ENCODE measurements at regions of chr19 and their contacts with region 1.

Region 1: DNA sequence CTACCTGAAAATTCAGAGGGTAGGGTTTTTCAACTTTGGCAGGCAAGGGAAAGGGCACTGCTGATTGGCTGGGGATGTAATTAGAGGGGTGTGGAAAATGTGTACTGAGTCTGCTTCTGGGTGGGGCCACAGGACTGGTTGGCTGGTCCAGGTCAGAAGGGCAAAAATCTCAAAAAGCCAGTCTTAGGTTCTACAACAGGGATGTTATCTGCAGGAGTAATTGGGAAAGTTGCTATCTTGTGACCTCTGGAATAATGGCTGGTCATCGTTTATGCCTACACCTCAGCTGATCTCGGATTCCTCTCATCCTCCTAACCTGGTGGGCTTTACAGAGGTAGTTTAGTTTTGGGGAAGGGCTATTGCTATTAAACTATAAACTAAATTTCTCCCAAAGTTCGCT is 136.7 kb upstream of the LSM14A start:
- DNase-seq: no peak
- H3K4me3 ChIP-seq: no peak overlapping the region
- H3K4me1 ChIP-seq: 0 out of 2 replicates have a peak, but pooled peaks cover 3% of the 10 kb centered on the region
- H3K27me3 ChIP-seq: no peaks in the 10 kb centered on the region

Region 2: GRCh38 chr19:33795370-33796163 is 240.1 kb before region 1 on chr19:
- in situ Hi-C with region 1: no loop called
- DNase-seq: peak; percentile 75 to 89
- H3K4me3 ChIP-seq: peak overlapping the region; percentile 82
- H3K4me1 ChIP-seq: peaks cover 17% of the 10 kb centered on the region
- H3K27me3 ChIP-seq: no peaks in the 10 kb centered on the region

Region 3: GRCh38 chr19:34096020-34096915 is 60.6 kb after region 1 on chr19:
- in situ Hi-C with region 1: no loop called
- DNase-seq: peak; percentile 73 to 99
- H3K4me3 ChIP-seq: no peak overlapping the region; the same call in 1 of the 2 replicates
- H3K4me1 ChIP-seq: peaks cover 13% of the 10 kb centered on the region
- H3K27me3 ChIP-seq: no peaks in the 10 kb centered on the region

Region 4: GRCh38 chr19:34150558-34150957 is 114.9 kb after region 1 on chr19:
- in situ Hi-C with region 1: loop called (anchors 5 kb)
- DNase-seq: no peak
- H3K4me3 ChIP-seq: no peak overlapping the region
- H3K4me1 ChIP-seq: no peaks in the 10 kb centered on the region
- H3K27me3 ChIP-seq: no peaks in the 10 kb centered on the region

Measured in HAP-1 (cell line).